ENCODE measurements at regions of chr12 and their contacts with region 1.

Region 1: GRCh38 chr12:52156736-52157565 is 34.9 kb downstream of the KRT80 start:
- DNase-seq: peak; percentile 92
- H3K4me3 ChIP-seq: no peak overlapping the region; a peak in 1 of 4 replicates
- H3K27ac ChIP-seq: no peak overlapping the region
- H3K4me1 ChIP-seq: no peaks in the 10 kb centered on the region
- H3K27me3 ChIP-seq: no peaks in the 10 kb centered on the region
- CTCF ChIP-seq: peak; percentile 98
- EP300 ChIP-seq: no peak
- RAD21 ChIP-seq: peak; percentile 99

Region 2: DNA sequence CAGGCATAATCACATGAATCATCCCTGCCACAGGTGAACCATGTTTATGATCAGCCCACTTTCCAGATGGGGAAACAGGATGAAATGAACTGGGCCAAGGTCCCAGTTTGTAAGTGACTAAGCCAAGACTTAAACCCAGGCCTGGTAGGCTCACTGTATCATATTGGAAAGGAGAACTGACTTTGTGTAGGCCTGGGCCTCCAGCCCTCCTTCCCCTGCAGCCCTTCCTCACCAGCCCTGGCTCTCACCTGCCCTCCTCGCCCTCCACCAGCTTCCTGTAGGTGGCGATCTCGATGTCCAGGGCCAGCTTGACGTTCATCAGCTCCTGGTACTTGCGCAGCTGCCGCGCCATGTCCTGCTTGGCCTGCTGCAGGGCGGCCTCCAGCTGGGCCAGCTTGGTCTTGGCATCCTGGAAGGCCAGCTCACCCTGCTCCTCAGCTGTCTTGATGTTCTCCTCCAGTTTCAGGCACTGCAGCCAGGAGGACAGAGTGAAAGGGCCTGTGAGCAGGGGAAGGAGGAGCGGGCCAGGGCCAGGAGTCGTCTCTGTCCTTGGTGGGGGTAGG is 15.1 kb after region 1 on chr12:
- CTCF ChIA-PET with region 1: interaction called, 12 read pairs
- POLR2A ChIA-PET with region 1: no interaction called
- DNase-seq: no peak
- H3K4me3 ChIP-seq: no peak overlapping the region
- H3K27ac ChIP-seq: no peak overlapping the region; a peak in 1 of 4 replicates
- H3K4me1 ChIP-seq: peaks cover 12 to 52% of the 10 kb centered on the region in 2 experiments; a peak in 2 of 4 replicates
- H3K27me3 ChIP-seq: no peaks in the 10 kb centered on the region
- CTCF ChIP-seq: peak; percentile 56
- EP300 ChIP-seq: no peak
- RAD21 ChIP-seq: peak; percentile 57

Region 3: GRCh38 chr12:52221912-52222457 is 65.0 kb after region 1 on chr12:
- CTCF ChIA-PET with region 1: interaction called, 14 read pairs
- POLR2A ChIA-PET with region 1: no interaction called
- DNase-seq: no peak
- H3K4me3 ChIP-seq: no peak overlapping the region; a peak in 1 of 4 replicates
- H3K27ac ChIP-seq: peak overlapping the region in 1 of 2 experiments; percentile 33; a peak in 1 of 4 replicates
- H3K4me1 ChIP-seq: peaks cover 3 to 9% of the 10 kb centered on the region in 2 experiments; a peak in 2 of 4 replicates
- H3K27me3 ChIP-seq: no peaks in the 10 kb centered on the region
- CTCF ChIP-seq: peak; percentile 66
- EP300 ChIP-seq: no peak
- RAD21 ChIP-seq: peak; percentile 35

Region 4: DNA sequence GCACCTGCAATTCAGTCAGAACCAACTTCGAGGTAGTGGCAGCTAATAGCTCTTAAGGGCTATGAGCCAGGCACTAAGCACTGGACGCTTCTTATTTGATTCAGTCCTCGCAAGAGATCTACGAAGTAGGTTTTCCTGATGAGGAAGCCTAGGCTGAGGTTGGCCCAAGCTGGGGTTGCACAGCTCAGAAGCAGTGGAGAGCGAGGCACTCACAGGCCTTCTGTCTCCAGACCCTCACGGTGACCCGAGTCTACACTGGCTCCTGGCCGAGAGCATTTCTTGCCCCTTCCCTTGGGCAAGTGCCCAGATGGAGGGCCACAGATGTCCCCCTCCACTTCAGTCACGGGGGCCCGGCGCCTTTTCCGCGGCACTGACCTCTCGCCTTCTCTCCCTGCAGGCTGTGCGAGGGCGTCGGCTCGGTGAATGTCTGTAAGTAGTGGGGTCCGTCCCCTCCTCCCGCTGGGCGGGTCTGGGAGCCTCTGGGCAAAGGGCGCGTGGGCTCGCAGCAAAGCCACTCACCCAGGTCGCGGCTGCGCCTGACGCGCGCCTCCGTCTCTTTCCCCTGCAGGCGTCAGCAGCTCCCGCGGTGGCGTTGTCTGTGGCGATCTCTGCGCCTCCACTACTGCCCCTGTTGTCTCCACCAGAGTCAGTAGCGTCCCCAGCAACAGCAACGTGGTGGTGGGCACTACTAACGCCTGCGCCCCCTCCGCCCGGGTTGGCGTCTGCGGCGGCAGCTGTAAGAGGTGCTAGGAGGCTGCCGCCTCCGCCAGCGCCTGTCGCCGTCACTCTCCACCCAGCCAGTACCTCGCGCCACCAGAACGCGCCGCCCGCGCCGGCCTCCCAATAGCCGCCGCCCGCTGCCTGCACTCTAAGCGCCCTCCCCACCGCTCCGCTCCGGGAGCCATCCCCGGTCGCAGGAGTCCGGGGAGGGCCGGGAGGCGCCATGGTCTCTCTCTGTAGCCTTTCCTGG is 151.2 kb after region 1 on chr12:
- CTCF ChIA-PET with region 1: interaction called, 20 read pairs
- POLR2A ChIA-PET with region 1: no interaction called
- DNase-seq: peak; percentile 89
- H3K4me3 ChIP-seq: peak overlapping the region; percentile 29 to 39; a peak in 3 of 4 replicates
- H3K27ac ChIP-seq: no peak overlapping the region
- H3K4me1 ChIP-seq: peaks cover 0 to 9% of the 10 kb centered on the region in 2 experiments; a peak in 1 of 4 replicates
- H3K27me3 ChIP-seq: no peaks in the 10 kb centered on the region
- CTCF ChIP-seq: no peak
- EP300 ChIP-seq: no peak
- RAD21 ChIP-seq: no peak; the same call in 1 of the 2 replicates

Region 5: GRCh38 chr12:52870351-52871290 is 713.7 kb after region 1 on chr12:
- CTCF ChIA-PET with region 1: interaction called, 10 read pairs
- POLR2A ChIA-PET with region 1: no interaction called
- DNase-seq: peak; percentile 84
- H3K4me3 ChIP-seq: no peak overlapping the region; a peak in 1 of 4 replicates
- H3K27ac ChIP-seq: peak overlapping the region in 1 of 2 experiments; percentile 69; a peak in 2 of 4 replicates
- H3K4me1 ChIP-seq: peaks cover 10 to 18% of the 10 kb centered on the region in 2 experiments; a peak in 3 of 4 replicates
- H3K27me3 ChIP-seq: no peaks in the 10 kb centered on the region
- CTCF ChIP-seq: peak; percentile 85
- EP300 ChIP-seq: no peak
- RAD21 ChIP-seq: peak; percentile 71

Measured in SK-N-SH (cell line).